ENCODE measurements at regions of chr18 and their contacts with region 1.

Region 1: DNA sequence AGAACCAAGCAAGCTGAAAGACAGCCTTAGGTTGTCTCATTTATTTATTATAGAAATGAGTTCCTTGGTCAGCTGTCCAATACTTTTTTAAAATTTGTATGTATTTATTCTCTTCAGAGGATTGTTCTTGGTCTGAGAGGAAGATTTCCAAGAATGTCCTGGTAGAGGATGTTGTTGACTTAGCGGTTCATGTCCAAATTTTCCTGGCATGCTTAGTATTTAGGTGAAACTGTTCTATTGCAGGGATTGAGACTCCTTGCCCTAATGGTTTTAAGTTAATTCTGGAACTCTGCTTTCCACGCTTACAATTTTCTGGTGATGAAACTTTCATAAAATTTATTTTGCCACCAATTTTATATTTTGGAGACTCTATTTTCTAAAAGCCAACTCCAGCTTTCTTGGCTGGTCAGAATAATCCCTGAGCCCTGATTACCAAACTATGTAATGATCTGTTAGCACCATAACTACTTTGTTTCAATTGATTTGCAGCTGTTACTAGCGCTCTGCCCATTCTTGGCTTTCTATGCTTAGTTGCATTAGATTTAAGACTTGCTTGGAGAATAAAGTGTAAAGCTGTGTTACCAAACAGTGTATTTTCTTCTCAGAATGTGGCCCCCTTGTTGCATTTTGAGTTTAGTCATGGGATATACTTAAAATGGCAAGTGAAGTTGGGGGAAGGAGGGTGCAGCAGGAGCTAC is 1868.8 kb upstream of the CELF4 start:
- DNase-seq: no peak
- ATAC-seq: no peak
- H3K4me3 ChIP-seq: no peak overlapping the region
- H3K4me3 Mint-ChIP-seq: no peak overlapping the region
- H3K27ac ChIP-seq: no peak overlapping the region
- H3K27ac Mint-ChIP-seq: no peak overlapping the region
- H3K4me1 ChIP-seq: peaks cover 0 to 9% of the 10 kb centered on the region in 2 experiments
- H3K4me1 Mint-ChIP-seq: no peaks in the 10 kb centered on the region
- H3K27me3 ChIP-seq: no peaks in the 10 kb centered on the region
- H3K27me3 Mint-ChIP-seq: no peaks in the 10 kb centered on the region

Region 2: DNA sequence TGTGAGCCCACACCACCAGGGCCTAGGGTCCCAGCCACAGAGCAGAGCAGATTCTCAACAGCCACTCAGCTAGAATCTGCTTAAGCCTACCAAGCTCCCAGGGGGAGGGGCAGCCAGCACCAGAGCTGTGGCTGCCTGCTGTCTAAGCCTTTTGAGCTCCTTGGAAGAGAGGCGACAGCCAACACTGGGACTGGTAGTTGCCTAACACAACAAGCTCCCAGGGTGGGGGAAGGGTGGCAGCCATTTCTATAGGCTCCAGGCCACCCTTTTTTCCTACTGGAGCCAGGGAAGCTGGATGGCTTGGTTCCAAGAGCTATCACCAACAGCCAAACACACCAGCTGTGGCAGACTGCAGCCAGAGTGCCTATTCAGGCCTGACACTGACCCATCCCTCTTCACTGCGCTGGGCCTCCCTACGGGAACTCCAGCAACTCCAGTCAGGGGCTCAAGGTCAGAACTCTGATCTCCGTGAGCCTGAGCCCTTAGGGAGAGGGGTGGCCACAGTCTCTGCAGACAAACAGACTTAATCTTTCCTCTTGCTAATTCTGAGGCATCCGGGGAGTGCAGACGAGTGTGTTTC is 44.5 kb before region 1 on chr18:
- CTCF ChIA-PET with region 1: no interaction called
- POLR2A ChIA-PET with region 1: no interaction called
- DNase-seq: no peak
- ATAC-seq: no peak
- H3K4me3 ChIP-seq: no peak overlapping the region
- H3K4me3 Mint-ChIP-seq: no peak overlapping the region
- H3K27ac ChIP-seq: no peak overlapping the region
- H3K27ac Mint-ChIP-seq: no peak overlapping the region
- H3K4me1 ChIP-seq: no peaks in the 10 kb centered on the region
- H3K4me1 Mint-ChIP-seq: no peaks in the 10 kb centered on the region
- H3K27me3 ChIP-seq: no peaks in the 10 kb centered on the region
- H3K27me3 Mint-ChIP-seq: no peaks in the 10 kb centered on the region

Region 3: GRCh38 chr18:39453882-39454281 is 19.5 kb after region 1 on chr18:
- CTCF ChIA-PET with region 1: interaction called in 1 of 2 experiments, 13 read pairs
- POLR2A ChIA-PET with region 1: no interaction called
- DNase-seq: no peak
- ATAC-seq: no peak
- H3K4me3 ChIP-seq: no peak overlapping the region
- H3K4me3 Mint-ChIP-seq: no peak overlapping the region
- H3K27ac ChIP-seq: no peak overlapping the region
- H3K27ac Mint-ChIP-seq: no peak overlapping the region
- H3K4me1 ChIP-seq: no peaks in the 10 kb centered on the region
- H3K4me1 Mint-ChIP-seq: peaks cover 0 to 6% (median 3%) of the 10 kb centered on the region in 3 donors
- H3K27me3 ChIP-seq: no peaks in the 10 kb centered on the region
- H3K27me3 Mint-ChIP-seq: no peaks in the 10 kb centered on the region

Region 4: GRCh38 chr18:40197711-40198110 is 763.3 kb after region 1 on chr18:
- CTCF ChIA-PET with region 1: no interaction called
- POLR2A ChIA-PET with region 1: no interaction called
- DNase-seq: no peak
- ATAC-seq: no peak
- H3K4me3 ChIP-seq: no peak overlapping the region
- H3K4me3 Mint-ChIP-seq: no peak overlapping the region
- H3K27ac ChIP-seq: no peak overlapping the region
- H3K27ac Mint-ChIP-seq: no peak overlapping the region
- H3K4me1 ChIP-seq: no peaks in the 10 kb centered on the region
- H3K4me1 Mint-ChIP-seq: no peaks in the 10 kb centered on the region
- H3K27me3 ChIP-seq: no peaks in the 10 kb centered on the region
- H3K27me3 Mint-ChIP-seq: no peaks in the 10 kb centered on the region